ENCODE measurements at regions of chr16 and their contacts with region 1.

Region 1: DNA sequence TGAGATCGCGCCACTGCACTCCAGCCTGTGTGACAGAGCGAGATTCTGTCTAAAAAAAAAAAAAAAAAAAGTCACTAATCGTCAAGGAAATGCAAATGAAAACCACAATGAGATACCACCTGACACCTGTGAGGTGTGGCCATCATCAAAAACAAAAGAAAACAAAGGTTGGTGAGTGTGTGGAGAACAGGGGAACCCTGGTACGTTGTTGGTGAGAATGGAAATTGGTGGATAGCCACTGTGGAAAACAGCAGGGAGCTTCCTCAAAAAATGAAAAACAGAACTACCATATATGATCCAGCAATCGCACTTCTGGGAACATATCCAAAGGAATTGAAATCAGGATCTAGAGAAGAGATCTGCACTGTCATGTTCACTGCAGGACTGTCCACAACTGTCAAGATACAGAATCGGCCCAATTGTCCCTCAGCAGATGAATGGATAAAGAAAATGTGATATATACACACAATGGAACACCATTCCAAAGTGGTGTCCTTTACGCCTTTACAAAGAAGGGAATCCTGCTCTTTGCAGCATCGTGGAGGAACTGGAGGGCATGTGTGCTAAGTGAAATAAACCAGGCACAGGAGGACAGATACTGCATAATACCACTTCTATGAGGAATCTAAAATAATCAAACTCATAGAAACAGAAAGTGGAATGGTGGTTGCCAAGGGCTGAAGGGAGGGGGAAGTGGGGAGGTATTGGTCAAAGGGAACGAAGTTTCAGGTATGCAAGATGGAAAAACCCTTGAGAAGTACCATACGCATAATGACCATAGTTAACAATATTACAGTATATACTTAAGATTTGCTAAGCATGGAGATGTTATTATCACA is 63.5 kb upstream of the PLCG2 start:
- DNase-seq: peak; percentile 61
- ATAC-seq: peak; percentile 58
- H3K4me3 Mint-ChIP-seq: peak overlapping the region; percentile 38
- H3K27ac Mint-ChIP-seq: peak overlapping the region; percentile 68
- H3K4me1 Mint-ChIP-seq: peaks cover 45% of the 10 kb centered on the region
- H3K27me3 Mint-ChIP-seq: no peaks in the 10 kb centered on the region

Region 2: GRCh38 chr16:81696961-81697615 is 18.5 kb before region 1 on chr16:
- CTCF ChIA-PET with region 1: interaction called, 10 read pairs
- POLR2A ChIA-PET with region 1: interaction called, 3 read pairs
- DNase-seq: peak; percentile 62
- ATAC-seq: peak; percentile 38
- H3K4me3 Mint-ChIP-seq: no peak overlapping the region
- H3K27ac Mint-ChIP-seq: peak overlapping the region; percentile 46
- H3K4me1 Mint-ChIP-seq: peaks cover 5% of the 10 kb centered on the region
- H3K27me3 Mint-ChIP-seq: no peaks in the 10 kb centered on the region

Region 3: DNA sequence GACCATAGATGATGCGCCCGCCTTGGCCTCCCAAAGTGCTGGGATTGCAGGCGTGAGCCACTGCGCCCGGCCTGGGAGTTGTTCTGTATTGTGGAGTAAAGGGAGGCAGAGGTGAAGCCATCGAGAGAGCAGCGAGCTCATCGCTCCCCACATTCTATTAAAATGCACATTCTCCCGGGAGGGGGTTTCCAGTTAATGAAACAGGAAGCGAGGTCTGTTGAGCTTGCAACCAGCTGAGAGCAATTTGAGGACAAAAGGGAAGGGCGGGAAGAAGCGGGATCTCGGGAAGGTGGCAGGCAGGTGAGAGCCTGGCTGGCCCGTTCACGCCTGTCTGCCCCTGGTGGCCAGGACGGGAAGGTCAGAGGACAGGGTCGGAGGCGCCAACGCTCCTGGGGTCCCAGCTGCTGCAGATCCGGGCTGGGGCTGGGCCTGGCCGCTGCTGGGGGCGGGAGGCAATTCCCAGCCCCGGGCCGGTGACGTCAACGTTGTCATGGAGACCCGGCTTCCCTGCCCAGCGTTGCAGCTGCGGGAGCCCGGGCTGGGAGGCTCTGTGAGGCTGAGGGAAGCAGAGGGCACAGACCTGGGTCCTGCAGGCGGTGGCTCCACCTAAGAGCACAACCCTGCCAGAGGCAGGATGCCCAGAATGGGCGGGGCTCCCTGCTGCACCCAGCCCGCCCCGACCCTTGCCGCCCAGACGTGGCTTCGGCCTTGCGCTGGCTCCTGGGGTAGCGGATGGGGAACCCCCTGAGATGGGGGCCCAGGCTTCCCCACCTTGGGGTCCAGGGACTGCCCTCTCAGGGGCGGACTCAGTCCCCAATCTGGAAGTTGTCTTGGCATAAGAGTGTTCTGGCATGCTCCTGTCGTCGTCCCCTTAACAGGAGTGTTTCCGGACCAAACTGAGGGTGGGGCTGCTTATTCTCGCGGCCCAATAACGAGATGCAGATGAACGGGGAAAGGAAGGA is 14.8 kb after region 1 on chr16:
- CTCF ChIA-PET with region 1: interaction called, 10 read pairs
- POLR2A ChIA-PET with region 1: interaction called, 4 read pairs
- DNase-seq: peak; percentile 67
- ATAC-seq: peak; percentile 92
- H3K4me3 Mint-ChIP-seq: peak overlapping the region; percentile 75
- H3K27ac Mint-ChIP-seq: peak overlapping the region; percentile 86
- H3K4me1 Mint-ChIP-seq: peaks cover 17% of the 10 kb centered on the region
- H3K27me3 Mint-ChIP-seq: peaks cover 12% of the 10 kb centered on the region